Activated CD8-positive, alpha-beta T cell treated with anti-CD3 and anti-CD28 coated beads for 36 hours (primary cell): ENCODE measurements at regions of chr16 and their contacts with region 1.

Region 1: DNA sequence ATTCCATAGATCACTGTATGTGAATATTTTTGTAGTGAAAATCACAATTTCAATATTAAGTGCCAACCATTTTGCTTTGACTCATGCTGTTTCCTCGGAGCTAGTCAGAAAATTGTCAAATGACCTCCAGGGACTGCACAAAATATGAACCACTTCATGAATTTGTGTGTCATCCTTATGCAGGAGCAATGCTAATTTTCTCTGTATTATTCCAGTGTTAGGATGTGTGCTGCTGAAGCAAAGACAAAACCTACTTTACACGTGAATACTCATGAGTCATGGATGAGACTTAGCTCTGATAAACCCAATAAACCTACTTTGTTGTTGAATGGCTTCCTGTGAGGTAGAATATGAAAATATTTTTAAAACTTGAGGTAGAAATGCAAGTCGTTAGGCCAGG is 65.2 kb downstream of the SHCBP1 start:
- DNase-seq: no peak
- ATAC-seq: no peak
- H3K4me3 Mint-ChIP-seq: no peak overlapping the region
- H3K27ac Mint-ChIP-seq: no peak overlapping the region
- H3K4me1 Mint-ChIP-seq: no peaks in the 10 kb centered on the region
- H3K27me3 Mint-ChIP-seq: peaks cover 11% of the 10 kb centered on the region
- CTCF ChIP-seq: no peak

Region 2: GRCh38 chr16:46612121-46612520 is 56.2 kb after region 1 on chr16:
- CTCF ChIA-PET with region 1: interaction called, 6 read pairs
- POLR2A ChIA-PET with region 1: no interaction called
- intact Hi-C with region 1: loop called (anchors 10 kb)
- DNase-seq: no peak
- ATAC-seq: no peak
- H3K4me3 Mint-ChIP-seq: no peak overlapping the region
- H3K27ac Mint-ChIP-seq: no peak overlapping the region
- H3K4me1 Mint-ChIP-seq: no peaks in the 10 kb centered on the region
- H3K27me3 Mint-ChIP-seq: no peaks in the 10 kb centered on the region
- CTCF ChIP-seq: no peak

Region 3: GRCh38 chr16:46621006-46621933 is 65.3 kb after region 1 on chr16 and contains the start of gene SHCBP1:
- CTCF ChIA-PET with region 1: interaction called, 10 read pairs
- POLR2A ChIA-PET with region 1: no interaction called
- intact Hi-C with region 1: loop called (anchors 10 kb)
- DNase-seq: peak; percentile 92
- ATAC-seq: peak; percentile 97
- H3K4me3 Mint-ChIP-seq: peak within 1 kb of the TSS; percentile 96
- H3K27ac Mint-ChIP-seq: peak within 1 kb of the TSS; percentile 83
- H3K4me1 Mint-ChIP-seq: peaks cover 13% of the 10 kb centered on the region
- H3K27me3 Mint-ChIP-seq: peaks cover 4% of the 10 kb centered on the region
- CTCF ChIP-seq: no peak
- total RNA-seq, gene SHCBP1: 37.0 to 37.6 TPM

Region 4: GRCh38 chr16:46929378-46930332 is 373.7 kb after region 1 on chr16:
- CTCF ChIA-PET with region 1: no interaction called
- POLR2A ChIA-PET with region 1: no interaction called
- intact Hi-C with region 1: no loop called
- DNase-seq: peak; percentile 72
- ATAC-seq: peak; percentile 87
- H3K4me3 Mint-ChIP-seq: no peak overlapping the region
- H3K27ac Mint-ChIP-seq: no peak overlapping the region
- H3K4me1 Mint-ChIP-seq: no peaks in the 10 kb centered on the region
- H3K27me3 Mint-ChIP-seq: no peaks in the 10 kb centered on the region
- CTCF ChIP-seq: peak; percentile 92

Region 5: DNA sequence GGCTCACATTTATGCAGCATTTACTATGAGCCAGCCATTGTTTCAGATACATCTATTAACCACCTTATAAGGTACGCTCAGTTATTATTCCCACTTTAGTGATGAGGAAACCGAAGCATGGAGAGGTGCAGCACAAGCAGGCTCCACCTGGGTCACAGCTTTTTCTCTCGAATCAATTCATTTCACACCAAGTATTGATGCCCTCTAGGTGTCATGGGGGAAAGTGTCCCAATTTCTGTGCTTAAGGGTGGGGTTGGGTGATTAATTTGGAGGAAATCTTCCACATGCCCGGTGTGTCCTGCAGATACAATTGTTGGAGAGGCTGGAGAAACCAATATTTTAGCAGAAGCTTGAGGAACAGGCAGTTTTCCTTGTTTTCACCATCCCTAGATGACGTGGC is 480.2 kb after region 1 on chr16:
- CTCF ChIA-PET with region 1: no interaction called
- POLR2A ChIA-PET with region 1: no interaction called
- intact Hi-C with region 1: no loop called
- DNase-seq: no peak
- ATAC-seq: no peak
- H3K4me3 Mint-ChIP-seq: no peak overlapping the region
- H3K27ac Mint-ChIP-seq: no peak overlapping the region
- H3K4me1 Mint-ChIP-seq: peaks cover 3% of the 10 kb centered on the region
- H3K27me3 Mint-ChIP-seq: peaks cover 7% of the 10 kb centered on the region
- CTCF ChIP-seq: no peak